Left ventricle myocardium superior (tissue), 1 donor: ENCODE measurements at regions of chr1 and their contacts with region 1.

Region 1: GRCh38 chr1:167076136-167076710 is 14.0 kb downstream of the GPA33 start:
- DNase-seq: no peak
- ATAC-seq: no peak

Region 2: GRCh38 chr1:167442124-167442848 is 366.1 kb after region 1 on chr1:
- intact Hi-C with region 1: loop called (anchors 10 kb)
- DNase-seq: peak; percentile 94
- ATAC-seq: peak; percentile 97